ENCODE measurements at regions of chr2 and their contacts with region 1.

Region 1: GRCh38 chr2:156589381-156590079 is 153.4 kb downstream of the GPD2 start:
- DNase-seq: peak; percentile 25
- ATAC-seq: peak; percentile 82
- H3K4me3 ChIP-seq: no peak overlapping the region
- H3K27ac ChIP-seq: no peak overlapping the region
- H3K4me1 ChIP-seq: no peaks in the 10 kb centered on the region
- H3K27me3 ChIP-seq: no peaks in the 10 kb centered on the region
- CTCF ChIP-seq: peak; percentile 66

Region 2: GRCh38 chr2:155368934-155369333 is 1220.6 kb before region 1 on chr2:
- CTCF ChIA-PET with region 1: no interaction called
- POLR2A ChIA-PET with region 1: no interaction called
- in situ Hi-C with region 1: no loop called
- intact Hi-C with region 1: loop called (anchors 5 kb)
- DNase-seq: no peak
- ATAC-seq: 0 out of 2 replicates have a peak, but pooled peaks have one; percentile 51
- H3K4me3 ChIP-seq: no peak overlapping the region
- H3K27ac ChIP-seq: no peak overlapping the region
- H3K4me1 ChIP-seq: no peaks in the 10 kb centered on the region
- H3K27me3 ChIP-seq: no peaks in the 10 kb centered on the region
- CTCF ChIP-seq: peak; percentile 45; the same call in 1 of the 2 replicates

Region 3: GRCh38 chr2:156332534-156333273 is 256.8 kb before region 1 on chr2 and contains the start of gene NR4A2:
- CTCF ChIA-PET with region 1: interaction called, 16 read pairs
- POLR2A ChIA-PET with region 1: interaction called, 6 read pairs
- in situ Hi-C with region 1: no loop called
- intact Hi-C with region 1: loop called (anchors 2 kb)
- DNase-seq: no peak
- ATAC-seq: peak; percentile 85
- H3K4me3 ChIP-seq: peak within 1 kb of the TSS; percentile 78 to 83
- H3K27ac ChIP-seq: peak within 1 kb of the TSS; percentile 65; the same call in 1 of the 2 replicates
- H3K4me1 ChIP-seq: peaks cover 13% of the 10 kb centered on the region
- H3K27me3 ChIP-seq: no peaks in the 10 kb centered on the region
- CTCF ChIP-seq: no peak
- total RNA-seq, gene NR4A2: 0.85 TPM

Region 4: DNA sequence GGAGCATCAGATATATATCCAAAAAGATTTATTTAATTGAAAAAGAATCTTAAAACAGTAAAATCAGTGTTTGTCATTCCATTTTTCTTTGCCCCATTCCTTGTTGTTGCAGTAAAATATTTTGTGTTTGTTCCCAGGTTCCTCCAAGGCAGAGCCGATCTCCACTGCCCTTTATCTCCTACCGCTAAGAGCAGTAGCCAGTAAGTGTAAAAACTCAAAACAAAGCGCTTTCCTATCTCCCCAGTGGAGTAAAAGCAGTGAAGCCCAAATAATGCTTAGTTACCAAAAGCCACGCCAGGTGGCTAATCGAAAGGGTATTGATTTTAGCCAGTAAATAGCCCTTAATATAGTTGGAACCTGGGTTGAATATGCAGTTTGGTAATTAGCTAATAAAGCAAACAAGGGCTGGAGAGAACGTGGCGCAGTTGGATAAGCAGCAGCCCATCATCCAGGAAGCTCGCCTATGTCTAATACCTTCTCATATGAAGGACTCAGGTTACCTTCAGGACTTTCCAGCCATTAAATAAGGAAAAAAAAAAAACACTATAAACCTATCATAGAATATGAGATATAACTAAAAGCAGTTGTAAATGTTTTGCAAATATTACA is 165.8 kb before region 1 on chr2:
- CTCF ChIA-PET with region 1: no interaction called
- POLR2A ChIA-PET with region 1: no interaction called
- in situ Hi-C with region 1: no loop called
- intact Hi-C with region 1: loop called (anchors 10 kb)
- DNase-seq: no peak
- ATAC-seq: no peak
- H3K4me3 ChIP-seq: no peak overlapping the region
- H3K27ac ChIP-seq: no peak overlapping the region
- H3K4me1 ChIP-seq: no peaks in the 10 kb centered on the region
- H3K27me3 ChIP-seq: no peaks in the 10 kb centered on the region; the same call in 1 of the 2 replicates
- CTCF ChIP-seq: no peak

Region 5: GRCh38 chr2:156841321-156841720 is 251.8 kb after region 1 on chr2:
- CTCF ChIA-PET with region 1: no interaction called
- POLR2A ChIA-PET with region 1: no interaction called
- in situ Hi-C with region 1: no loop called
- intact Hi-C with region 1: no loop called
- DNase-seq: no peak
- ATAC-seq: no peak
- H3K4me3 ChIP-seq: no peak overlapping the region
- H3K27ac ChIP-seq: no peak overlapping the region
- H3K4me1 ChIP-seq: no peaks in the 10 kb centered on the region
- H3K27me3 ChIP-seq: no peaks in the 10 kb centered on the region
- CTCF ChIP-seq: no peak

Region 6: GRCh38 chr2:156892467-156893281 is 303.1 kb after region 1 on chr2:
- CTCF ChIA-PET with region 1: no interaction called
- POLR2A ChIA-PET with region 1: no interaction called
- in situ Hi-C with region 1: no loop called
- intact Hi-C with region 1: loop called (anchors 10 kb)
- DNase-seq: peak; percentile 30
- ATAC-seq: peak; percentile 83; the same call in 1 of the 2 replicates
- H3K4me3 ChIP-seq: peak overlapping the region; percentile 19 to 31
- H3K27ac ChIP-seq: no peak overlapping the region
- H3K4me1 ChIP-seq: 0 out of 2 replicates have a peak, but pooled peaks cover 3% of the 10 kb centered on the region
- H3K27me3 ChIP-seq: no peaks in the 10 kb centered on the region; the same call in 1 of the 2 replicates
- CTCF ChIP-seq: peak; percentile 58

Measured in Panc1 (cell line).